ENCODE measurements at regions of chr20 and their contacts with region 1.

Region 1: GRCh38 chr20:5658912-5659345 is 91.3 kb upstream of the SHLD1 start:
- DNase-seq: peak; percentile 91 to 99 (median 97)
- H3K4me3 ChIP-seq: peak overlapping the region in 1 of 3 experiments; percentile 37
- H3K4me3 Mint-ChIP-seq: no peak overlapping the region
- H3K27ac ChIP-seq: peak overlapping the region; percentile 88 to 97
- H3K27ac Mint-ChIP-seq: peak overlapping the region; percentile 90 to 100 (median 100)
- H3K4me1 ChIP-seq: peaks cover 88 to 97% of the 10 kb centered on the region in 2 donors
- H3K4me1 Mint-ChIP-seq: peaks cover 79% of the 10 kb centered on the region
- H3K27me3 ChIP-seq: no peaks in the 10 kb centered on the region
- H3K27me3 Mint-ChIP-seq: peaks cover 0 to 4% (median 0%) of the 10 kb centered on the region in 3 donors
- CTCF ChIP-seq: no peak

Region 2: DNA sequence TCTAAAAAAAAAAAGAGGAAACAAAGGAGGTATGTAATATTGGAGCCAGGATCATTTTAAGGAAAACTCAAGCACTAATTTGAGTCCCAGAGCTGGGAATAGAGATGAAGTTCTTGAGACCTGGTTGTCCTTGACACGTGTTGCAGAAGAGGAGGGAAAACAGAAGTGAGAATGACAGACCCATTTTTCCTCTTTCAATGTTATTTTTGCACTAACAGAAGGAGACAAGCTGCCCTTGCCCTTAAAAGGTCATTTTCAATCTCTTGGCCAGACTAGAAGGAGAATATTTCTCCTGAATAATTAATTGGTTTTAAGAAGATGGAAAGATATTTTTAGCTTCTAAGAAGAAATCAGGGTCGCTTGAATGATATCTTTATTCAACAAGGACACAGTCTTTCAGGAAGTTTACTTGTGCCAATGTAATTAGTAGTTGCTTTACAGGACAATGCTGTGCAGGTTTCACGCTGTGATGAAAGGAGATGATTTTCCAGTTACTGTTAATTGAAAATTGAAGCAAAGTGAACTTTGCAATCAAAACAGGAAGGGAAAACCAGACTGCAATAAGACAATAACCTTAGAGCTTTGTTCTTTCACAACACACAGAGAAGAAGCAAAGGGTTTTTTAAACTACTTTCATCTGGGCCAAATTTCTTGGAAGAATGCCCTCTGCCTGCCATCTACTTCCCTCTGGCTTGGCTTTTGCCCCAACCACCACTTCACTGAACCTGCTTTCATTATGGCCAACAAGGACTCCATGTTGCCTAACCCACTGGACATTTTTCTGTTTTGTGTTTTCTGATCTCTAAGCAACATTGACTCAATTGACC is 16.6 kb before region 1 on chr20:
- intact Hi-C with region 1: loop called in 1 of 2 experiments (anchors 2 kb)
- DNase-seq: peak; percentile 82 to 95 (median 86)
- H3K4me3 ChIP-seq: peak overlapping the region in 1 of 3 experiments; percentile 11
- H3K4me3 Mint-ChIP-seq: peak overlapping the region in 1 of 2 donors; percentile 49
- H3K27ac ChIP-seq: peak overlapping the region; percentile 90 to 98
- H3K27ac Mint-ChIP-seq: peak overlapping the region; percentile 96 to 100 (median 99)
- H3K4me1 ChIP-seq: peaks cover 64 to 65% of the 10 kb centered on the region in 2 donors
- H3K4me1 Mint-ChIP-seq: peaks cover 62% of the 10 kb centered on the region
- H3K27me3 ChIP-seq: no peaks in the 10 kb centered on the region
- H3K27me3 Mint-ChIP-seq: peaks cover 0 to 5% (median 1%) of the 10 kb centered on the region in 3 donors
- CTCF ChIP-seq: no peak

Region 3: GRCh38 chr20:5674176-5674660 is 15.3 kb after region 1 on chr20:
- intact Hi-C with region 1: loop called in 1 of 2 experiments (anchors 1 kb)
- DNase-seq: peak; percentile 85 to 98 (median 87)
- H3K4me3 ChIP-seq: peak overlapping the region in 1 of 3 experiments; percentile 36
- H3K4me3 Mint-ChIP-seq: no peak overlapping the region
- H3K27ac ChIP-seq: peak overlapping the region; percentile 76 to 87
- H3K27ac Mint-ChIP-seq: peak overlapping the region; percentile 93 to 98 (median 96)
- H3K4me1 ChIP-seq: peaks cover 75 to 88% of the 10 kb centered on the region in 2 donors
- H3K4me1 Mint-ChIP-seq: peaks cover 59% of the 10 kb centered on the region
- H3K27me3 ChIP-seq: no peaks in the 10 kb centered on the region
- H3K27me3 Mint-ChIP-seq: no peaks in the 10 kb centered on the region
- CTCF ChIP-seq: no peak

Region 4: GRCh38 chr20:5688431-5688972 is 29.6 kb after region 1 on chr20:
- intact Hi-C with region 1: loop called in 1 of 2 experiments (anchors 2 kb)
- DNase-seq: peak; percentile 57 to 95 (median 84)
- H3K4me3 ChIP-seq: peak overlapping the region in 1 of 3 experiments; percentile 24
- H3K4me3 Mint-ChIP-seq: peak overlapping the region; percentile 53 to 68
- H3K27ac ChIP-seq: peak overlapping the region; percentile 73 to 74
- H3K27ac Mint-ChIP-seq: peak overlapping the region; percentile 76 to 94 (median 89)
- H3K4me1 ChIP-seq: peaks cover 47% of the 10 kb centered on the region in 2 donors
- H3K4me1 Mint-ChIP-seq: peaks cover 46% of the 10 kb centered on the region
- H3K27me3 ChIP-seq: no peaks in the 10 kb centered on the region
- H3K27me3 Mint-ChIP-seq: peaks cover 0 to 6% (median 0%) of the 10 kb centered on the region in 3 donors
- CTCF ChIP-seq: no peak

Region 5: DNA sequence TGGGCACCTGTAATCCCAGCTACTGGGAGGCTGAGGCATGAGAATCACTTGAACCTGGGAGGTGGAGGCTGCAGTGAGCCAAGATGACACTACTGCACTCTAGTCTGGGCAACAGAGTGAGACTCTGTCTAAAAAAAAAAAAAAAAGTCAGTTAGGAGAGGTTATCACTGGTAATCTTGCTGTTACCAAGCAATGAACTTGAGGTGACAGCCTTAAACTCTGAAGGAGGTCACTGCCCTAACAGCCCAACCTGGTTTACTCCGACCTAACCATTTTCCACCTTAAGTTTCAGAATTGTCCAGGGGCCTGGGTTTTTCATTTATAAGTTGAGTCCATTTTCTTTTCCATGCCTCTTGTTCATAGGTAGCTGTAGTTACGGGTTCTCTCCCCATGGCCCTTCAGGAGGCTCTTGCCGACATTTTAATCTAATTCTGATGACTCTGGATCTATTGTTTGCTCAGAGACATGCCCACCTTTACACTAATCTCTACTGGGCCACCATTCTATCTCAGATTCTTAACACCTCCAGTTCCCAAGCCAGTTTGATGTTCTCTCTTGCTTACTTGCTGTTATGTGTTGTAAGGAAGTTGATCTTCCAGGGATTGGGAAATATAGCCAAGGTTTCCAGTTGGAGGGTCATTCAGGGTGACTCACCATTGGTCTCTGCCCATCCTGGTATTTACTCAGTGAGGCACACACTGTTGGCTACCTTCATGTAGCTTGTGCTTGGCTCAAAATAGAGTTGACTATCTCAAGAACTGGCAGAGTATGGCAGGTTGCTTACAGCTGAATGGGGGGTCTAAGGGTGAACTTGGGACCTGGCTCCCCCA is 120.4 kb after region 1 on chr20:
- intact Hi-C with region 1: no loop called
- DNase-seq: peak in 2 of 3 donors; percentile 6 to 20
- H3K4me3 ChIP-seq: no peak overlapping the region
- H3K4me3 Mint-ChIP-seq: no peak overlapping the region
- H3K27ac ChIP-seq: no peak overlapping the region
- H3K27ac Mint-ChIP-seq: peak overlapping the region in 2 of 7 donors; percentile 5 to 66
- H3K4me1 ChIP-seq: no peaks in the 10 kb centered on the region
- H3K4me1 Mint-ChIP-seq: peaks cover 6% of the 10 kb centered on the region
- H3K27me3 ChIP-seq: no peaks in the 10 kb centered on the region
- H3K27me3 Mint-ChIP-seq: no peaks in the 10 kb centered on the region
- CTCF ChIP-seq: no peak